Lower leg skin (tissue), 4 donors: ENCODE measurements at regions of chr2 and their contacts with region 1.

Region 1: DNA sequence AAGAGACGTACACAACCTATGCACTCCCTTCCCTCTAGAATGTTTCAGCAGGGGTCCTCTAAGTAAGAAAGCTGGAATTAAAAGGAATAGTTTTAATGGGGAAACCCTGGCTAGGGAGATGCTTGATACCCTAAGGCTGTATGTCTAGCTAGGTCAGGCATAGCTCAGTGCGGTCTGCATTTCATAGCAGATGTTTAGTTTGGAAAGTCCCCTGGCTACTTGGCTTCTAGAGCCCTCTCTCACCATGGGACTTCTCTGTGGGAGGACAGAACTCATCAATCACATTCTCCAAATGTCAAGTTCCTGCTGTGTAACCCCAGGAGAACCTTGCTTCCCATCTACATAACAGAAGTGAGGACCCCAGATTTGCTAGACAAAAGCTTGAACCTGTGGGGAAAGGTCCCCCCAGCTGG is 24.1 kb upstream of the ANXA4 start:
- DNase-seq: no peak
- H3K4me3 ChIP-seq: no peak overlapping the region
- CTCF ChIP-seq: no peak
- POLR2A ChIP-seq: no peak

Region 2: GRCh38 chr2:69559442-69560146 is 158.3 kb before region 1 on chr2:
- intact Hi-C with region 1: loop called (anchors 2 kb)
- DNase-seq: no peak
- H3K4me3 ChIP-seq: no peak overlapping the region
- CTCF ChIP-seq: peak in 1 of 3 donors; percentile 20
- POLR2A ChIP-seq: no peak